Heart left ventricle (tissue), 16 donors: ENCODE measurements at regions of chr13 and their contacts with region 1.

Region 1: DNA sequence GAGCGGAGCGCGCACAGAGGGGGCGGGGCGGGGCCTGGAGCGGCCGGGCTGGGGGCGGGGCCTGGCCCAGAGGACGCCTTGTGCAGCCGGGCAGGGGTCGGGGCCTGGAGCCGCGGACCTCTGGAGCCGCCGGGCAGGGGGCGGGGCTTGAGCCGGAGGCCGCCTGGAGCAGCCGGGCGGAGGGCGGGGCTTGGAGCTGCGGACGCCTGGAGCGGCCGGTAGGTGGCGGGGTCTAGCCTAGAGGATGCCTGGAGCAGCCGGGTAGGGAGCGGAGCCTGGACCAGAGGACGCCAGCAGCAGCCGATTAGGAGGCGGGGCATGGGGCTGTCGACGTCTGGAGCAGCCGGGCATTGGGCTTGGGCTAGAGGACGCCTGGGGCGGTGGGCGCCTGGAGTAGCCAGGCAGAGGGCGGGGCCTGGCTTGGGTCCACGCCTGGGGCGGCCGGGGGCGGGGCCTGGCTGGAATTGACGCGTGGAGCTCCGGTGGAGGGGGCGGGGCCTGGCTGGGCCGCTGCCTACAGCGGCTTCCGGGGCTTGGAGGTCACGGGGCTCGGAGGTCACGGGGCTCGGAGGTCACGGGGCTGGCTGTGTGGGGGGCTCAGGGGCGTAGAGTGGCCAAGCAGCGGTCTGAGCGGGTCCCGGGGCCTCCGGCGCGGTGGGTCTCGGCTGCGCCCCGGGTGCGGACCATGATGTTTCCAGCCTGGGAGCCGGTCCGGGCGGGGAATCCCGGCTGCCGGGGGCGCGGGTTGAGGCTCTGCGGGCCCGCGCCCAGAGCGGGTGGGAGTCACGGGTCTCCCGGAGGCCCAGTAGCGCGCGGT is at the start of gene ANKRD10:
- DNase-seq: peak; percentile 99 to 100 (median 99)
- ATAC-seq: peak; percentile 91 to 95 (median 92)
- H3K4me3 ChIP-seq: peak within 1 kb of the TSS; percentile 71 to 99 (median 96)
- H3K27ac ChIP-seq: peak within 1 kb of the TSS; percentile 93 to 100 (median 100)
- H3K4me1 ChIP-seq: peaks cover 8 to 53% (median 36%) of the 10 kb centered on the region in 12 donors
- H3K27me3 ChIP-seq: no peaks in the 10 kb centered on the region
- CTCF ChIP-seq: peak; percentile 75 to 100 (median 96)
- POLR2A ChIP-seq: peak in 1 of 2 donors; percentile 68
- total RNA-seq, gene ANKRD10: 37.9 to 81.3 (median 49.7) TPM

Region 2: GRCh38 chr13:110715395-110716235 is 199.7 kb before region 1 on chr13:
- intact Hi-C with region 1: loop called in 8 of 10 experiments (anchors 1 to 10 kb)
- DNase-seq: peak; percentile 98 to 99 (median 98)
- ATAC-seq: peak; percentile 76 to 84 (median 80)
- H3K4me3 ChIP-seq: peak overlapping the region; percentile 57 to 98 (median 95)
- H3K27ac ChIP-seq: peak overlapping the region; percentile 87 to 100 (median 100)
- H3K4me1 ChIP-seq: peaks cover 4 to 33% (median 27%) of the 10 kb centered on the region in 12 donors
- H3K27me3 ChIP-seq: no peaks in the 10 kb centered on the region
- CTCF ChIP-seq: peak in 7 of 12 donors; percentile 16 to 50 (median 30)
- POLR2A ChIP-seq: peak; percentile 54 to 80

Region 3: DNA sequence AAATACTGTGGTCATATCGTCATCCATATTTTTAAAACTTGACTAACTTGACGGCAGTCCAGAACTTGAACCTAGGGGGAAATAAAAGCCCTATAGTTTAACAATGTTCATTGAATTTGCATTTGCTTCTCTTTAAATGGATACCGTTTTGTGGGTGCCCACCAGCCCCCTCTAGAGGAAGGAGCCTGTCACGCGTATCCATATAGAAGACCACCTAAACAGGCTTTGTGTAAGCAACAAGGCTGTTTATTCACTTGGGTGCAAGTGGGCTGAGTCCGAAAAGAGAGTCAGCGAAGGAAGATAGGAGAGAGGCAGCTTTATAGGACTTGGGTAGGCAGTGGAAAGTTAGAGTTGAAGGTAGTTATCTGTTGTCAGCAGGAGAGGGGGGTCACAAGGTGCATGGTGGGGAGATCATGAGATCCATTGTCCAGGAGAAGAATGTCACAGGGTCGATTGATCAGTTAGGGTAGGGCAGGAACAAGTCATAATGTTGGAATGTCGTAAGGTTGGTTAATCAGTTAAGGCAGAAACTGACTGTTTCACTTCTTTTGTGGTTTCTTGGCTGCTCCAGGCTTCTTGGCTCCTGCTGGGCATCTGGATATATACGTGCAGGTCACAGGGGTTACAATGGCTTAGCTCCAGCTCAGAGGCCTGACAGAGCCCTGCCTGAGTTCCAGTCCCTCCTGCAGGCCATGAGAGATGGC is 42.1 kb after region 1 on chr13:
- intact Hi-C with region 1: no loop called
- DNase-seq: no peak
- ATAC-seq: no peak
- H3K4me3 ChIP-seq: no peak overlapping the region
- H3K27ac ChIP-seq: no peak overlapping the region
- H3K4me1 ChIP-seq: peaks cover 0 to 9% (median 0%) of the 10 kb centered on the region in 12 donors
- H3K27me3 ChIP-seq: no peaks in the 10 kb centered on the region
- CTCF ChIP-seq: peak in 2 of 12 donors; percentile 13 to 23
- POLR2A ChIP-seq: no peak

Region 4: GRCh38 chr13:111006506-111007031 is 91.3 kb after region 1 on chr13:
- intact Hi-C with region 1: loop called in 5 of 10 experiments (anchors 1 to 10 kb)
- DNase-seq: peak; percentile 84 to 92 (median 88)
- ATAC-seq: peak; percentile 93 to 97 (median 96)
- H3K4me3 ChIP-seq: peak overlapping the region in 4 of 12 donors; percentile 1 to 15 (median 5)
- H3K27ac ChIP-seq: peak overlapping the region; percentile 70 to 93 (median 88)
- H3K4me1 ChIP-seq: peaks cover 3 to 37% (median 23%) of the 10 kb centered on the region in 12 donors
- H3K27me3 ChIP-seq: no peaks in the 10 kb centered on the region
- CTCF ChIP-seq: no peak
- POLR2A ChIP-seq: no peak

Region 5: GRCh38 chr13:111046590-111047141 is 131.4 kb after region 1 on chr13:
- intact Hi-C with region 1: loop called (anchors 1 to 10 kb)
- DNase-seq: peak in 4 of 5 donors; percentile 48 to 59 (median 56)
- ATAC-seq: peak; percentile 39 to 79 (median 66)
- H3K4me3 ChIP-seq: no peak overlapping the region
- H3K27ac ChIP-seq: peak overlapping the region in 6 of 12 donors; percentile 32 to 71 (median 62)
- H3K4me1 ChIP-seq: peaks cover 0 to 20% (median 7%) of the 10 kb centered on the region in 12 donors
- H3K27me3 ChIP-seq: no peaks in the 10 kb centered on the region
- CTCF ChIP-seq: peak in 8 of 12 donors; percentile 12 to 38 (median 26)
- POLR2A ChIP-seq: no peak

Region 6: GRCh38 chr13:111216166-111216960 is 301.1 kb after region 1 on chr13:
- intact Hi-C with region 1: loop called in 4 of 10 experiments (anchors 5 to 10 kb)
- DNase-seq: peak in 1 of 5 donors; percentile 37
- ATAC-seq: peak; percentile 40 to 61 (median 43)
- H3K4me3 ChIP-seq: no peak overlapping the region
- H3K27ac ChIP-seq: peak overlapping the region in 9 of 12 donors; percentile 8 to 65 (median 22)
- H3K4me1 ChIP-seq: peaks cover 0 to 92% (median 73%) of the 10 kb centered on the region in 12 donors
- H3K27me3 ChIP-seq: no peaks in the 10 kb centered on the region
- CTCF ChIP-seq: peak in 11 of 12 donors; percentile 19 to 57 (median 42)
- POLR2A ChIP-seq: no peak